Activated CD4-positive, alpha-beta T cell treated with anti-CD3 and anti-CD28 coated beads, Interleukin-2, amount 10 ng/mL, durations not matched to agents 24 days and 14 days (primary cell): ENCODE measurements at regions of chr3 and their contacts with region 1.

Region 1: GRCh38 chr3:184250167-184250828 is 826 bp downstream of the EEF1AKMT4 start:
- DNase-seq: peak; percentile 97
- H3K4me3 Mint-ChIP-seq: peak overlapping the region; percentile 98
- H3K27ac Mint-ChIP-seq: peak overlapping the region; percentile 100
- H3K4me1 Mint-ChIP-seq: peaks cover 16% of the 10 kb centered on the region
- H3K27me3 Mint-ChIP-seq: no peaks in the 10 kb centered on the region

Region 2: GRCh38 chr3:184135149-184135910 is 115.0 kb before region 1 on chr3 and contains the start of gene EIF2B5:
- intact Hi-C with region 1: loop called (anchors 1 kb)
- DNase-seq: peak; percentile 96
- H3K4me3 Mint-ChIP-seq: peak within 1 kb of the TSS; percentile 97
- H3K27ac Mint-ChIP-seq: peak within 1 kb of the TSS; percentile 93
- H3K4me1 Mint-ChIP-seq: peaks cover 32% of the 10 kb centered on the region
- H3K27me3 Mint-ChIP-seq: peaks cover 5% of the 10 kb centered on the region
- total RNA-seq, gene EIF2B5: 72.2 and 74.7 TPM in 2 replicates

Region 3: DNA sequence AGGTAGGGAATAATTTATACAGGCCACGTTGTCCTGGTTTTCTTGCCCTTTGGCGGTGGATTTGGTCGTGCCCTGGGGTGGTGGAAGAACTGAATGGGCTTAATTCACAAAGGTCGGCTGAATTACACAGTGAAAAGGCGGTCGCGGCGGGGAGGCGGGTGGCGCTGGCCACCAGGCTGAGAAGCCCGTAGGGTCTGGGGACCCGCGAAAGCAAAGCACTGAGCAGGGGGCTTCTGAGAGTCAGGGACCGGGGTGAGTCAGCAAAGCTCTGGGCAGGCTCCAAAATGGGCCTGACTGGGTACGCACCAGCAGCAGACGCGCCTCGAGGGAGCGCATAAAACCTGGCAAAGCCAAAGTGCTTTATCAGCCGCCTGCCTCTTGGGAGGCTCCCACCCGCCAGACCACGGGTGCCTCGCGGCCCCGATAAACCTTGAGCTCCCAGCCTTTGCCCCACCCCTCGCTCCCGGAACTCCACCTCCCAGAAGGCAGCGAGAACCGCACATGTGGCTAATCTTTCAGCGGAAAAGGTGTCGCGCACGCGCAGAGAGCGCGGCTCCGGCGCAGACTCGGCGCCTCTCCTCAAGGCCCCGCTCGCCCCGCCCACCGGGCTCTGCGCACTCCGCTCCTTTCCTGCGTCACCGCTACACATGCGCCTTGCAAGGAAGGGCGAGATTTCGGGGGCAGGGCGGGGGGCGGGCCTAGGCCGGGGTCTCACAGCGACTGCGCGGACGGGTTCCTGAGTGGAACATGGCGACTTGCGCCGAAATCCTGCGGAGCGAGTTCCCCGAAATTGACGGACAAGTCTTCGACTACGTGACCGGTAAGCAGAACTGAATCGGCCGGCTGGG is 64.6 kb before region 1 on chr3 and contains the start of gene ABCF3:
- intact Hi-C with region 1: loop called (anchors 1 kb)
- DNase-seq: peak; percentile 100
- H3K4me3 Mint-ChIP-seq: peak within 1 kb of the TSS; percentile 92
- H3K27ac Mint-ChIP-seq: peak within 1 kb of the TSS; percentile 92
- H3K4me1 Mint-ChIP-seq: peaks cover 28% of the 10 kb centered on the region
- H3K27me3 Mint-ChIP-seq: no peaks in the 10 kb centered on the region
- total RNA-seq, gene ABCF3: 66.9 and 67.6 TPM in 2 replicates

Region 4: GRCh38 chr3:184289426-184289938 is 39.2 kb after region 1 on chr3:
- intact Hi-C with region 1: loop called (anchors 2 kb)
- DNase-seq: peak; percentile 89
- H3K4me3 Mint-ChIP-seq: no peak overlapping the region
- H3K27ac Mint-ChIP-seq: no peak overlapping the region
- H3K4me1 Mint-ChIP-seq: peaks cover 5% of the 10 kb centered on the region
- H3K27me3 Mint-ChIP-seq: peaks cover 15% of the 10 kb centered on the region

Region 5: GRCh38 chr3:184314363-184314699 is 64.0 kb after region 1 on chr3 and contains the start of gene EIF4G1:
- intact Hi-C with region 1: loop called (anchors 2 kb)
- DNase-seq: peak; percentile 98
- H3K4me3 Mint-ChIP-seq: peak within 1 kb of the TSS; percentile 89
- H3K27ac Mint-ChIP-seq: peak within 1 kb of the TSS; percentile 89
- H3K4me1 Mint-ChIP-seq: peaks cover 28% of the 10 kb centered on the region
- H3K27me3 Mint-ChIP-seq: no peaks in the 10 kb centered on the region
- total RNA-seq, gene EIF4G1: 680 and 700 TPM in 2 replicates